ENCODE measurements at regions of chr9 and their contacts with region 1.

Region 1: DNA sequence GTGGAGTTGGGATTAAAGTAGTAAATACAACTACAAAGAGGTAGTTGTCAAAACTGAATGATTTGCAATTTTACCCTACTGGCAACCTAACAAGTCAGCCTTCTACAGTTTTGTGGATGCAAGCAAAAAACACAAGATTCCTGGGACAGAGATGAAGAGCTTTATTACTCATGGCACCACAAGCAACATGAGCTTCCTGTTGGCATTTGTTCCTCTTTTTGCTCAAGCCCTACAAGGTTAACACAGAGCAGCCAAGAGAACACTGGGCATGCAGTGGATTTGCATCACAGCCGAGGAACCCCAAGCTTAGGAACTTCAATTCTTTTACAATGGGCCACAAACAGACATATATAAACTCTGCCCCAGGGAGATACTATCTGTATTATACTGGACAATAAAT is 28.8 kb upstream of the DMAC1 start:
- DNase-seq: no peak
- ATAC-seq: peak in 2 of 4 donors; percentile 42 to 44
- H3K4me3 ChIP-seq: no peak overlapping the region
- H3K27ac ChIP-seq: peak overlapping the region in 1 of 12 donors; percentile 56
- H3K4me1 ChIP-seq: peaks cover 0 to 4% (median 0%) of the 10 kb centered on the region in 12 donors
- H3K27me3 ChIP-seq: no peaks in the 10 kb centered on the region
- CTCF ChIP-seq: no peak
- POLR2A ChIP-seq: no peak

Region 2: DNA sequence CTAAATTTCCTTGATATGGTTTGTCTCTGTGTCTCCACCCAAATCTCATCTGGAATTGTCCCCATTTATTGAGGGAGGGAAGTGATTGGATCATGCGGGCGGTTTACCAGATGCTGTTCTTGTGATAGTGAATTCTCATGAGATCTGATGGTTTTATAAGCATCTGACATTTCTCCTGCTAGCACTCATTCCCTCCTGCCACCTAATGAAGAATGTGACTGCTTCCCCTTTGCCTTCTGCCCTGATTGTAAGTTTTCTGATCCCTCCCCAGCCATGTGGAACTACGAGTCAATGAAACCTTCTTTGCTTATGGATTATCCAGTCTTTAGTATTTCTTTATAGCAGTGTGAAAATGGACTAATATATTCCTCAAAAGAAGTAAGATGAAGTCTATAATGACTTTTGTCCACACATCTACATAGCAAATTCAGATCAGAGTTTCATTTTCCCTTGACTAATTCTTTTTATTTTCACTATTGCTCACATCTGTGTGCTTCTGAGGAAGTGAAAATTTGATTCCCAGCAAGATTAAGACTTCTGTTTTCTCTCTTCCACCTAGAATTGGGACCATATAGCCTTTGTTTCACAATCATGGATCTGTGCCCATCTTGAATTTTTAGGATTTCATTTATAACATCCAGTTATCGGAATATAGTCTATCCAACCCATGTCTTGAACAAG is 422.3 kb before region 1 on chr9:
- intact Hi-C with region 1: loop called in 1 of 10 experiments (anchors 10 kb)
- DNase-seq: no peak
- ATAC-seq: no peak
- H3K4me3 ChIP-seq: no peak overlapping the region
- H3K27ac ChIP-seq: peak overlapping the region in 1 of 12 donors; percentile 70
- H3K4me1 ChIP-seq: peaks cover 0 to 25% (median 6%) of the 10 kb centered on the region in 12 donors
- H3K27me3 ChIP-seq: no peaks in the 10 kb centered on the region
- CTCF ChIP-seq: no peak
- POLR2A ChIP-seq: no peak

Region 3: DNA sequence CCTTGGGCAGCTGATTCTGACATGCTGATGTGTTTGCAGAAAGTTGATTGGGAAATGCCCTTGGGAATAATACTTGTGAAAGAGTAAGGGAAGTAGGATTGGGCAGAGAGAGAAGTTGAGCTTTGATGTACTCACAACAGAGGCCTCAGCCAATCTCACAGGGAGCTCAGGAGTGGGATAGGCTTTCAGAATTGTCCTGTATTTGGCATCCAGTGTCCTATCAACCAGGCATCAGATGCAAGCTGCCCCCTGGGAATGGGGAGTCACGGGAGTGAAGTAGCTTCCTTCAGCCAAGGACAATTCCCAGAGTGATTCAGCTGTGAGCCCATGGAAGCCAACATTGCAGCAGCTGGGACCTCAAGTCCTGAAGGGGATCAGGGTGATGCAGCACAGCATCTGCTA is 68.3 kb before region 1 on chr9:
- intact Hi-C with region 1: loop called in 1 of 10 experiments (anchors 10 kb)
- DNase-seq: peak in 2 of 5 donors; percentile 28 to 45
- ATAC-seq: peak in 2 of 4 donors; percentile 53 to 66
- H3K4me3 ChIP-seq: no peak overlapping the region
- H3K27ac ChIP-seq: no peak overlapping the region
- H3K4me1 ChIP-seq: no peaks in the 10 kb centered on the region
- H3K27me3 ChIP-seq: no peaks in the 10 kb centered on the region
- CTCF ChIP-seq: no peak
- POLR2A ChIP-seq: no peak

Region 4: DNA sequence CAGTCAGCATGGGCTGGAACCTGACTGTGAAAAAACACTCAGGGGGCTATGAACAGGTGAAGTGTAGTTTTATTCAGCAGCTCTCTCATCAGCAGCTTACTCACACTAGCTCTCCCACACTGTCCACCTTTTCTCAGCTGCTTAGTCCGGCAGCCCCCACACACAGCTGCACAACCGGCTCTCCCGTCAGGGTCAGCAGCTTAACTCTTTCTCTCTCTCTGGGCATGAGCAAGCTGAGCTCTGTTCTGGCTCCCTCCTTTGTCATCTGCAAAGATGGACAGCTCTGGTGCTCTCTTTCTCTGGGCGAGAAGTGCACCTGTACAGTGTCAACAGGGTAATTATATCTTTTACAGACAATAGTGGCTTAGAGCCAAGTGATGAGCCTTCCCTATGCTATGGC is 36.9 kb before region 1 on chr9:
- intact Hi-C with region 1: no loop called
- DNase-seq: no peak
- ATAC-seq: no peak
- H3K4me3 ChIP-seq: no peak overlapping the region
- H3K27ac ChIP-seq: no peak overlapping the region
- H3K4me1 ChIP-seq: no peaks in the 10 kb centered on the region
- H3K27me3 ChIP-seq: no peaks in the 10 kb centered on the region
- CTCF ChIP-seq: no peak
- POLR2A ChIP-seq: no peak

Region 5: DNA sequence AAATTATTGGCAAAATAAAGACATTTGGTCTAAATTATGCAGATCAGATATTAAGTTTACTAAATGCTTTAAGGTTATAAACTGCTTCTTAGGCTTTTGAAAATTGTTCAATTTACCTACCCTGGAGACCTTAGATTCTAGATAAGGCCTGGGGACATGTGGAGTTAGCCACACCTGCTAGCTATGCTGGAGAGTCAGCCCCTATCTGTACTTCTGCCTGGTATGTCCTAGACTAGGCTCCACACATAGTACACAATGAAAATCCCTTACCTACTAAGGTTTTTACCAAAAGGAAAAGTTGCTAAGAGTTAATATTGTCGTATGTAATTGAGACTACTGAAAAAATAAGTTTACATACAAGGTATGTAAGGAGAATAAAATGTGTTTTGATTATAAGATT is 21.0 kb after region 1 on chr9:
- intact Hi-C with region 1: no loop called
- DNase-seq: no peak
- ATAC-seq: no peak
- H3K4me3 ChIP-seq: no peak overlapping the region
- H3K27ac ChIP-seq: no peak overlapping the region
- H3K4me1 ChIP-seq: no peaks in the 10 kb centered on the region
- H3K27me3 ChIP-seq: no peaks in the 10 kb centered on the region
- CTCF ChIP-seq: no peak
- POLR2A ChIP-seq: no peak

Region 6: DNA sequence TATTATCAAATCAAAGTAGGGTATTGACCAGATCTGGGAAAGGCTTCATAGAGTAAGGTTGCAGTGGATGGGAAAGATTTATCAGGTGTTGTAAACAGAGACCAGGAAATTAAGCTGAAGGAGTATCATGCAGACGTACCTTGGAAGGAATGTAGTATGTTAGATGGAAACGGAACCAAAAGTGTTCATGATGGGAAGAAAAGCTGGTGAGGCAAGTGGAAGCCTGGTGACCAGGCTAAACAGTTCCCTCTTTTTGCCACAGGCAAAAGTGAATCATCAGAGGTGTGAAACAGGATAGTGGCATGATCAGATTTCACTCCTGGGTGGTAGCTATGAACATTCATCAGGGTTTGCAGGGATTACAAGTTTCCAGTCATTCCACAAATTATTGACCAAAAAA is 751.3 kb after region 1 on chr9:
- intact Hi-C with region 1: no loop called
- DNase-seq: no peak
- ATAC-seq: no peak
- H3K4me3 ChIP-seq: no peak overlapping the region
- H3K27ac ChIP-seq: no peak overlapping the region
- H3K4me1 ChIP-seq: no peaks in the 10 kb centered on the region
- H3K27me3 ChIP-seq: no peaks in the 10 kb centered on the region
- CTCF ChIP-seq: no peak
- POLR2A ChIP-seq: no peak

Measured in heart left ventricle (tissue), 16 donors.